ENCODE measurements at regions of chr1 and their contacts with region 1.

Region 1: DNA sequence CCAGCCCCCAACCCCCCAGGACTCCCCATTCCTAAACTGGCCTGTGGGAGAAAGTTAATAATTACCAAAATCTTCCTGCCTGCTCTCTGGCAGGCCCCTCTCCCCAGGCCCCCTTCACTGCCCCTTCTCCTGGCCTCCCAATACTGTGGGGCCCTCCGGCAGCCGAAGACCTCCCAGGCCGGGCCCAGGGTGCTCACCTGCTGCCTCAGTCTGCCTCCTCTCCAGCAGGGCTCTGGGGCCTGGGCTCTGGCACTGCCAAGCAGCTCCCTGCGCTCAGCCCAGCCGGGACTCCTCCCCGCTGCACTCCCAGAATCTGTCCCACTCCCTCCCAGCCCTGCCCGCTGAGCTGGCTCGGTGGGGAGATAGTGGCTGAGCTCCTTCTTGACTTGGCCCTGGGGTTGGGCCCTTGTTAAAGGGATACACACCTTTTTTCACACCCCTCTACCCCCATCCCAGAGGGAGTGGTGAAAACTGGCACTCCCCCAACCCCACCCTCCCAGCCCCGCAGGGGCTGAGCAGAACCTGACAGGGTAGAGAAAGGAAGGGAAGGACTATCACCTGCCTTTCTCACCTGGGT is at the start of gene S100A16:
- DNase-seq: peak; percentile 70 to 84 (median 81)
- ATAC-seq: peak; percentile 76
- H3K4me3 ChIP-seq: peak within 1 kb of the TSS; percentile 28 to 40
- H3K27ac ChIP-seq: peak within 1 kb of the TSS; percentile 67 to 89 (median 85)
- H3K4me1 ChIP-seq: peaks cover 65% of the 10 kb centered on the region
- H3K27me3 ChIP-seq: no peaks in the 10 kb centered on the region
- CTCF ChIP-seq: no peak
- POLR2A ChIP-seq: peak; percentile 44 to 82 (median 76)
- total RNA-seq, gene S100A16: 20.1 to 42.5 TPM

Region 2: DNA sequence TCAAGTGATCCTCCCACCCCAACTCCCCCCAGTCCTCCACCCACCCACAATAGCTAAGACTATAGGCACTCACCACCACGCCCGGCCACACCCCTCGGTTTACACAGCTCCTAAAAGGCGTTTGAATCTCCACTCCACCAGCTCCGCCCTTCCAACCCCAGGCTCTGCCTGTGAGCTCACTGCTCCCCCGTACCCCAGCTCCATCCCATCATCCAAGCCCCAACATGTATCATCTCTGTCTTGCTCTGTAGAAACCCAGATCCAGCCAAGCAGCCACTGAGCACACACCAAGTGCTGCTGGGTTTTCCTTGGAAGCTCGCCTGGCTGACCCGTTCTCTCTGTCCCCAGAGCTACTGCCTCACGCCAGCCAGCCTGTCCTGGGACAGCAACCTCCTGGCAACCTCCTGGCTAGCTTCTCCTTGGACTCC is 35.2 kb before region 1 on chr1:
- intact Hi-C with region 1: loop called (anchors 5 kb)
- DNase-seq: no peak
- ATAC-seq: no peak
- H3K4me3 ChIP-seq: no peak overlapping the region
- H3K27ac ChIP-seq: no peak overlapping the region
- H3K4me1 ChIP-seq: peaks cover 2% of the 10 kb centered on the region
- H3K27me3 ChIP-seq: no peaks in the 10 kb centered on the region
- CTCF ChIP-seq: no peak
- POLR2A ChIP-seq: no peak